Activated B cell treated with CpG ODN at 0.5 μM for 24 hours (primary cell): ENCODE measurements at regions of chr9 and their contacts with region 1.

Region 1: GRCh38 chr9:6353851-6354686 is 25.9 kb downstream of the TPD52L3 start:
- DNase-seq: no peak
- ATAC-seq: peak; percentile 91
- H3K4me3 Mint-ChIP-seq: no peak overlapping the region
- H3K27ac Mint-ChIP-seq: no peak overlapping the region
- H3K4me1 Mint-ChIP-seq: peaks cover 12% of the 10 kb centered on the region
- H3K27me3 Mint-ChIP-seq: peaks cover 4% of the 10 kb centered on the region
- CTCF ChIP-seq: peak; percentile 85

Region 2: DNA sequence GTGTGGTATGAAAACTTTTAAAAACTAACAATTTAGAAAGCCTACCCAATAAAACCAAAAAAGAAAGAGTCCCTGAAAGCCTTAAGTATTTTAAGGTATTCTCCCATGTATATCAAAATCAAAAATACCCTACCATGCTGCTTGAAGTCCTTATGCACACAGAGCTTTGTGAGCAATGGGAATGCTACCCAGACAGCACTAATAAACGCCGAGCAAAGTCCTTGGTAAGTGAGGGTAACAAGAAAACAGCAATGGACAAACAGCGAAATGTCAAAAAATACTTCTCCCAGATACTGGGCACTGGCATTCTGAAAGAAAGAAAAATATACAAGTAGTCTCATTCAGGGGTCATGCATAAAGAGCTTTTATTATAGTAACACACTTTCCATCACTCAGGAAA is 548.6 kb before region 1 on chr9:
- CTCF ChIA-PET with region 1: no interaction called
- POLR2A ChIA-PET with region 1: no interaction called
- intact Hi-C with region 1: no loop called
- DNase-seq: no peak
- ATAC-seq: no peak
- H3K4me3 Mint-ChIP-seq: no peak overlapping the region
- H3K27ac Mint-ChIP-seq: no peak overlapping the region
- H3K4me1 Mint-ChIP-seq: no peaks in the 10 kb centered on the region
- H3K27me3 Mint-ChIP-seq: no peaks in the 10 kb centered on the region
- CTCF ChIP-seq: no peak

Region 3: DNA sequence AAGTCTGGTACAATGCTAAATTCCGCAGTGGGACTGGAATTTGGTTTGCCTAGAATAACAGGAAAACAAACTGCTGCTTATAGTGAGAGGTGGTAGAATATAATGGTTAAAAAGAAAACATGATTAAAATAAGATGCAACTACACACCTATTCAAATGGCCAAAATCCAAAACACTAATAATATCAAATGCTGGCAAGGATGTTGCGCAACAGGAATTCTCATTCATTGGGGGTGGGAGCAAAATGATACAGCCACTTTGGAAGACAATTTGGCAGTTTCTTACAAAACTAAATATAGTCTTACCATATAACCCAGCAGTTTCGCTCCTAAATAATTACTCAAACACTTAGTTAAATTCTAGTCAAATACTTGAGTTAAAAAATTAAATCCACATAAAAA is 76.7 kb before region 1 on chr9:
- CTCF ChIA-PET with region 1: no interaction called
- POLR2A ChIA-PET with region 1: no interaction called
- intact Hi-C with region 1: no loop called
- DNase-seq: no peak
- ATAC-seq: no peak
- H3K4me3 Mint-ChIP-seq: no peak overlapping the region
- H3K27ac Mint-ChIP-seq: no peak overlapping the region
- H3K4me1 Mint-ChIP-seq: no peaks in the 10 kb centered on the region
- H3K27me3 Mint-ChIP-seq: peaks cover 3% of the 10 kb centered on the region
- CTCF ChIP-seq: no peak

Region 4: DNA sequence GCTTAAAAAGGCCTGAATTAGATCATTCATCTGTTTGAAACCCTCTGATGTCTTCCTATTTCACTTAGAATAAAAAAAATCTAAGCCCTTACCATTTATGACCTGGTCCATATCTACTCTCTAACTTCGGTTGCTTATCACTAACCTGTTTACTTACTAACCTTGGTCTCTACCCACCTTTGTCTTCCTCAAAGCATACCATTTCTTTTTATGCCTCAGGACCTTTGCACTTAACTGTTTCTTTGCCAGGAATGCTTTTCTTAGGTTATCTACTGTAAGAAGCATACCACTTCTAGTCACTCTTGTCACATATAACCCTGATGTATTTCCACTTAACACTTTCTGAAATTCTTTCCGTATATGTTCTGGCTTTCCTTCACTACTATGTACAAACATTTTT is 125.9 kb after region 1 on chr9:
- CTCF ChIA-PET with region 1: interaction called, 3 read pairs
- POLR2A ChIA-PET with region 1: no interaction called
- intact Hi-C with region 1: loop called (anchors 5 kb)
- DNase-seq: no peak
- ATAC-seq: no peak
- H3K4me3 Mint-ChIP-seq: no peak overlapping the region
- H3K27ac Mint-ChIP-seq: no peak overlapping the region
- H3K4me1 Mint-ChIP-seq: peaks cover 2% of the 10 kb centered on the region
- H3K27me3 Mint-ChIP-seq: no peaks in the 10 kb centered on the region
- CTCF ChIP-seq: no peak

Region 5: GRCh38 chr9:6566409-6567139 is 212.5 kb after region 1 on chr9:
- CTCF ChIA-PET with region 1: interaction called, 65 read pairs
- POLR2A ChIA-PET with region 1: interaction called, 4 read pairs
- intact Hi-C with region 1: loop called (anchors 1 kb)
- DNase-seq: no peak
- ATAC-seq: no peak
- H3K4me3 Mint-ChIP-seq: no peak overlapping the region
- H3K27ac Mint-ChIP-seq: no peak overlapping the region
- H3K4me1 Mint-ChIP-seq: no peaks in the 10 kb centered on the region
- H3K27me3 Mint-ChIP-seq: no peaks in the 10 kb centered on the region
- CTCF ChIP-seq: no peak

Region 6: DNA sequence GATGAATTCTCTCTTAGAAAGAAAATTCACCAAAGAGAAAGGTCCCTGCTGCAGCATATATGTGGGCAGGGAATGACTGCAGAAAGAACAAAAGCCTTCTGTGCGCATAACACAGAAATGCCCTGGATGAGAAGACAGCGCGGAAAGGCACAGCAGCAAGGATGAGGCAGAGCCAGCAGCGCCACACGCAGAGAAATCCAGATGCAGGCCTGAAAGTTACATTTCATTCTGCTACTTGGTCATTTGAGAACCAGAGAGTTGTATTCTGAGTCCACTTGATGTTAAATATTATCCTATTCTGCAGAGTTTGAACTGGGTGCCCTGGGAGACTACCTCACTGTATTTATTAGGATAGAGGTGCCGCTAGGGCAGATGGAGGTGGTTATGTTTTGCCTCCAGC is 222.9 kb after region 1 on chr9:
- CTCF ChIA-PET with region 1: no interaction called
- POLR2A ChIA-PET with region 1: no interaction called
- intact Hi-C with region 1: no loop called
- DNase-seq: no peak
- ATAC-seq: no peak
- H3K4me3 Mint-ChIP-seq: no peak overlapping the region
- H3K27ac Mint-ChIP-seq: no peak overlapping the region
- H3K4me1 Mint-ChIP-seq: peaks cover 47% of the 10 kb centered on the region
- H3K27me3 Mint-ChIP-seq: peaks cover 19% of the 10 kb centered on the region
- CTCF ChIP-seq: no peak

Region 7: DNA sequence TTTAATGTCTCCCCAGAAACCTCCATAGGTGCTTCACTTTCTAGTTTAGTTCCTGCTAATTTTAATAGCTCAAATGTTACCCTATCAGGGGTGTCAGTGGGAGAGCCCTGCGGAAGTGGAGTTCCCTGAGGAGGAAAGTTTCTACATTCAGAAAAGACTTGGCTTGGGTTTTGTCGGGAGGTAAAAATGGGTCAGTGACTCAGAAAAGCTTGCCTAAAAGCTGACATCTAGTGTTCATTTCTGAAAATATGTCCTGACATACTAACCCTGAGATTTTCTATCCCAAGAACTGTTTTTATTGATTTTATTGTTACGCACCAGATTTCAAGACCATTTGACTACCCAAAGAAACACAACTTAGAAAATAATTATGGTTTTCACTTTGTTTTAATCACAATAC is 332.3 kb after region 1 on chr9:
- CTCF ChIA-PET with region 1: interaction called, 4 read pairs
- POLR2A ChIA-PET with region 1: no interaction called
- intact Hi-C with region 1: loop called (anchors 5 kb)
- DNase-seq: no peak
- ATAC-seq: no peak
- H3K4me3 Mint-ChIP-seq: peak overlapping the region; percentile 50
- H3K27ac Mint-ChIP-seq: peak overlapping the region; percentile 84
- H3K4me1 Mint-ChIP-seq: peaks cover 75% of the 10 kb centered on the region
- H3K27me3 Mint-ChIP-seq: no peaks in the 10 kb centered on the region
- CTCF ChIP-seq: no peak